ENCODE measurements at regions of chr15 and their contacts with region 1.

Region 1: GRCh38 chr15:62649793-62650420 is 392.6 kb upstream of the TPM1 start:
- DNase-seq: peak; percentile 57
- ATAC-seq: peak; percentile 50 to 79

Region 2: GRCh38 chr15:62533687-62534086 is 116.2 kb before region 1 on chr15:
- intact Hi-C with region 1: loop called in 1 of 2 experiments (anchors 10 kb)
- DNase-seq: no peak
- ATAC-seq: no peak

Region 3: DNA sequence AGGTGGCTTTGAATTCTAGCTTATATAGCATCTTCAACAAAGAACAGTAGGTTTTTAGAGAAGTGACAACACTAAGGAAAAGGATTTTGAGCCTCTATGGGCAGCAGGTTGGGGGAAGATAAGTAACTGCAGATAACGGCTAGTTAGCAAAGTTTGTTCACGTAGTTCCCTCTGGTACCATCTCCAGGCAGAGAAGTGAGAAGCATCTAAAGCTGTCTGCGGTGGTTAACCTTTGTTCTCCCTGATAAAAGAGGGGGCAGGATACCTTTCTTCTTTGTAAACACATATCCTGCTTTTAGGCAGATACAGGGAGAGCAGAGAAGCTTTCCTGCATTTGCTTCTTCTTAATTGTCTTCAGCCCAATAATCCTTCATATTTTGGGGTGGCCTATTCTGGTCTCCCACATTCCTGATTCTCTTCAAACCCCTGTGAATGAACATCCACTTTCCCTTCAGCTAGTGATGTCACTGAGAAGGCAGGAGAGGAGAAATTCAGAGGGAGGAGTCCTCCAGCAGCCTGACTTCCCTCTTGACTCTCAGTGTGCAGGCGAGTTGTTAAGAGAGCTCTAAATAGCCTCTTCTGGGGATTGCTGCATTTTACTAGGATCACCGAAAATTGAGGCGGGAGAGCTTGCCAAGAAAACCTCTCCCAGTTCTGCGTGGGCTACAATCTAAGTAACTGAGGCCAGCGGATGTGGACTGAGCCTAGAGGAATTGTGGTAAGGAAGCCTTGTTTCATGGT is 91.1 kb before region 1 on chr15:
- intact Hi-C with region 1: loop called in 1 of 2 experiments (anchors 10 kb)
- DNase-seq: peak; percentile 72
- ATAC-seq: peak; percentile 86 to 87